Pancreas (tissue), 10 donors: ENCODE measurements at regions of chr1 and their contacts with region 1.

Region 1: GRCh38 chr1:21324368-21325141 is 34.3 kb upstream of the ECE1 start:
- DNase-seq: peak; percentile 79 to 93 (median 88)
- ATAC-seq: peak; percentile 57 to 76 (median 70)
- H3K4me3 ChIP-seq: no peak overlapping the region
- H3K27ac ChIP-seq: peak overlapping the region; percentile 64 to 93 (median 80)
- H3K4me1 ChIP-seq: peaks cover 63 to 92% (median 65%) of the 10 kb centered on the region in 3 donors
- H3K27me3 ChIP-seq: no peaks in the 10 kb centered on the region
- CTCF ChIP-seq: no peak

Region 2: GRCh38 chr1:21270086-21270689 is 54.4 kb before region 1 on chr1:
- intact Hi-C with region 1: loop called in 1 of 3 experiments (anchors 10 kb)
- DNase-seq: peak; percentile 65 to 94 (median 83)
- ATAC-seq: peak; percentile 55 to 75 (median 61)
- H3K4me3 ChIP-seq: no peak overlapping the region
- H3K27ac ChIP-seq: peak overlapping the region in 2 of 4 donors; percentile 48 to 66
- H3K4me1 ChIP-seq: peaks cover 29 to 58% (median 43%) of the 10 kb centered on the region in 3 donors
- H3K27me3 ChIP-seq: no peaks in the 10 kb centered on the region
- CTCF ChIP-seq: peak; percentile 63 to 75 (median 70)

Region 3: GRCh38 chr1:21368515-21369289 is 44.1 kb after region 1 on chr1:
- intact Hi-C with region 1: no loop called
- DNase-seq: peak; percentile 70 to 90 (median 82)
- ATAC-seq: peak; percentile 87 to 97 (median 96)
- H3K4me3 ChIP-seq: no peak overlapping the region
- H3K27ac ChIP-seq: no peak overlapping the region
- H3K4me1 ChIP-seq: peaks cover 0 to 3% (median 2%) of the 10 kb centered on the region in 3 donors
- H3K27me3 ChIP-seq: no peaks in the 10 kb centered on the region
- CTCF ChIP-seq: peak; percentile 70 to 95 (median 93)

Region 4: DNA sequence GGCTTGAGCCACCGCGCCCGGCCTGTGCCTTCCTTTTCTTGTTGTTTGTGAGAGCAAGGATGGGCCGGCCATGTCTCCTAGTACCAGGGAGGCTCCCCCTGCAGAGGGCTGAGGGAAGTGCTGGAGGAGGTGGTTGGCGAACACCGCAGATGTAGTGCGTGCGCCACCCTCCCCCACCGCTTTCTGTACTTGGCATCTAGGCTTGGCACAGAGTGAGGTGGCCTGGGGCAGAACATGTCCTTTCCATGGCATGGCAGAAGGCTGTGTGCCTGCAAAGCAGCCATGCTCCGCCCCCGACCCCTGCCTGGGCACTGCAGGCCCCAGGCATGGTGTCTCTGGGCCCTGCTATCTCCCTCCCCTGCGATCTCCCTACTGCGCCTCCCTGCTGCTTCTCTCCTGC is 215.4 kb after region 1 on chr1:
- intact Hi-C with region 1: no loop called
- DNase-seq: no peak
- ATAC-seq: no peak
- H3K4me3 ChIP-seq: no peak overlapping the region
- H3K27ac ChIP-seq: no peak overlapping the region
- H3K4me1 ChIP-seq: peaks cover 5 to 12% (median 9%) of the 10 kb centered on the region in 3 donors
- H3K27me3 ChIP-seq: no peaks in the 10 kb centered on the region
- CTCF ChIP-seq: no peak